ENCODE measurements at regions of chr3 and their contacts with region 1.

Region 1: GRCh38 chr3:107429320-107430181 is 52.3 kb downstream of the CCDC54 start:
- DNase-seq: peak; percentile 80 to 86 (median 81)
- ATAC-seq: peak; percentile 81 to 89 (median 87)
- H3K4me3 ChIP-seq: peak overlapping the region; percentile 15 to 94 (median 78)
- H3K27ac ChIP-seq: peak overlapping the region; percentile 58 to 99 (median 96)
- H3K4me1 ChIP-seq: peaks cover 0 to 27% (median 7%) of the 10 kb centered on the region in 12 donors
- H3K27me3 ChIP-seq: no peaks in the 10 kb centered on the region
- CTCF ChIP-seq: peak; percentile 81 to 92 (median 88)
- POLR2A ChIP-seq: peak in 1 of 2 donors; percentile 25

Region 2: DNA sequence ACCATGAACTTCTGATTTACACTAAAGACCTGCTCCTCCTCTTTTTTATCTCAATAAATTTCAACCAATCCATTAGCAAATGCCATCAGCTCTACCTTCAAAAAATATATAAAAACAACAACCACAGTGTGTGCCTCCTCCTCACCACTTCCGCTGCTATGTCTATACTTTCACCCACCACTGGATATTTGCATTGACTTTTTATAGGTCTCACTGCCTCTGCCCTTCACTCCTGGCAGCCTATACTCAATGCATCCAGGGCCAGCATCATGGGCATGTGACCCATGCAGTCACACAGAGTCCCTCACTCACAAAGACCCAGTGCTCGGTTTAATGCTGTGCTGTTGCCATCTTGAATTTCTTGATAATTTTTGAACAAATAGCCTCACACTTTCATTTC is 105.8 kb before region 1 on chr3:
- intact Hi-C with region 1: no loop called
- DNase-seq: no peak
- ATAC-seq: no peak
- H3K4me3 ChIP-seq: no peak overlapping the region
- H3K27ac ChIP-seq: no peak overlapping the region
- H3K4me1 ChIP-seq: no peaks in the 10 kb centered on the region
- H3K27me3 ChIP-seq: no peaks in the 10 kb centered on the region
- CTCF ChIP-seq: no peak
- POLR2A ChIP-seq: no peak

Region 3: GRCh38 chr3:107377151-107377550 is 52.4 kb before region 1 on chr3 and contains the start of gene CCDC54:
- intact Hi-C with region 1: no loop called
- DNase-seq: no peak
- ATAC-seq: no peak
- H3K4me3 ChIP-seq: no peak within 1 kb of the TSS
- H3K27ac ChIP-seq: no peak within 1 kb of the TSS
- H3K4me1 ChIP-seq: peaks cover 0 to 2% (median 0%) of the 10 kb centered on the region in 12 donors
- H3K27me3 ChIP-seq: no peaks in the 10 kb centered on the region
- CTCF ChIP-seq: no peak
- POLR2A ChIP-seq: no peak
- total RNA-seq, gene CCDC54: not detected

Region 4: GRCh38 chr3:107522510-107523288 is 93.1 kb after region 1 on chr3 and contains the start of gene BBX:
- intact Hi-C with region 1: loop called (anchors 1 to 5 kb)
- DNase-seq: peak; percentile 91 to 95 (median 92)
- ATAC-seq: peak; percentile 97 to 99 (median 98)
- H3K4me3 ChIP-seq: peak within 1 kb of the TSS; percentile 75 to 97 (median 88)
- H3K27ac ChIP-seq: peak within 1 kb of the TSS; percentile 77 to 96 (median 92)
- H3K4me1 ChIP-seq: peaks cover 0 to 20% (median 10%) of the 10 kb centered on the region in 12 donors
- H3K27me3 ChIP-seq: no peaks in the 10 kb centered on the region
- CTCF ChIP-seq: peak in 3 of 12 donors; percentile 8 to 11 (median 8)
- POLR2A ChIP-seq: peak; percentile 31 to 89
- total RNA-seq, gene BBX: 34.0 to 60.5 (median 48.0) TPM

Region 5: GRCh38 chr3:107562969-107563529 is 133.5 kb after region 1 on chr3:
- intact Hi-C with region 1: no loop called
- DNase-seq: no peak
- ATAC-seq: peak in 1 of 4 donors; percentile 41
- H3K4me3 ChIP-seq: no peak overlapping the region
- H3K27ac ChIP-seq: no peak overlapping the region
- H3K4me1 ChIP-seq: peaks cover 0 to 14% (median 0%) of the 10 kb centered on the region in 12 donors
- H3K27me3 ChIP-seq: no peaks in the 10 kb centered on the region
- CTCF ChIP-seq: no peak
- POLR2A ChIP-seq: no peak

Region 6: DNA sequence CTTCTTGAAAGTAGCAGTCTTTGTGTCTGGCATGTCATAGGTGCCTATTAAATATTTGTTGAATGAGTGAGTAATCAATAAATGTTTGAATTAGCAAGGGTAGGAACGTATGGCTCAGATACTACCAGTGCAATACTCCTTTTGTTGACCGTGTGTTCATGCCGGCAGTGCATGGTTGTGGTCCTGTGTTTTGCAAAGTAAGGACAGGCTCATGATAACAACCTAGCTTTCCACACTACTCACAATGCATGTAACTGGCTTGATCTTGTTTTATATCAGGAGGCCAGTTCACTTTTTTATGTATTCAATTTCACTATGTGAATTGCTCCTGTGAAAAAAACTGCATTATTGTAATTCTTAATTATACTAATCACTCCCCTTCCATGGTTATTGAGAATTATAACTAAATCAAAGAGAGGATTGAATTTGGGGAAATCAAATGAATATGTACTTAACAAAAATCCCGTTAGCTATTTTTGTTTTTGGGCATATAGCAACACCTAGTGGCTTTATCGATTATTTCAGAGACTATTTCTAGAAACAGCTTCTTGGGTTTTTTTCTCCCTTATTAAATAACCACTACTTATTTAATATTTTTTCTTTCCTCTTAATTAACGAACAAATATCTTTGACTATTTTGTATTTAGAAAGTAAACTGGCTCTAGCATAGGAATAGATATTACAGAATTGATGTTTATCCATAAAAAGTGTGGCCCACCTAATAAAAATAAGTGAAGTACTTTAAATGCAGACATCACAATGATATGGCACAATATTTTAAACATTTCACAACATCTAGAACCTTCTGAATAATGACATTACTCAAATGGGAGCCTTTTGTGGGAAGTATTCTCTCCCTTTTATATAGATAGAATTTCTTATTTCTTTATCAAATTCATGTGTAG is 311.7 kb after region 1 on chr3:
- intact Hi-C with region 1: loop called in 1 of 10 experiments (anchors 10 kb)
- DNase-seq: no peak
- ATAC-seq: no peak
- H3K4me3 ChIP-seq: no peak overlapping the region
- H3K27ac ChIP-seq: no peak overlapping the region
- H3K4me1 ChIP-seq: peaks cover 0 to 7% (median 0%) of the 10 kb centered on the region in 12 donors
- H3K27me3 ChIP-seq: no peaks in the 10 kb centered on the region
- CTCF ChIP-seq: peak; percentile 29 to 73 (median 57)
- POLR2A ChIP-seq: no peak

Measured in heart left ventricle (tissue), 16 donors.